Activated CD4-positive, alpha-beta T cell treated with anti-CD3 and anti-CD28 coated beads for 36 hours (primary cell): ENCODE measurements at regions of chr1 and their contacts with region 1.

Region 1: GRCh38 chr1:59432531-59433439 is 135.9 kb downstream of the FGGY start:
- DNase-seq: no peak
- ATAC-seq: peak; percentile 89
- H3K4me3 Mint-ChIP-seq: no peak overlapping the region
- H3K27ac Mint-ChIP-seq: no peak overlapping the region
- H3K4me1 Mint-ChIP-seq: peaks cover 20% of the 10 kb centered on the region
- H3K27me3 Mint-ChIP-seq: no peaks in the 10 kb centered on the region

Region 2: DNA sequence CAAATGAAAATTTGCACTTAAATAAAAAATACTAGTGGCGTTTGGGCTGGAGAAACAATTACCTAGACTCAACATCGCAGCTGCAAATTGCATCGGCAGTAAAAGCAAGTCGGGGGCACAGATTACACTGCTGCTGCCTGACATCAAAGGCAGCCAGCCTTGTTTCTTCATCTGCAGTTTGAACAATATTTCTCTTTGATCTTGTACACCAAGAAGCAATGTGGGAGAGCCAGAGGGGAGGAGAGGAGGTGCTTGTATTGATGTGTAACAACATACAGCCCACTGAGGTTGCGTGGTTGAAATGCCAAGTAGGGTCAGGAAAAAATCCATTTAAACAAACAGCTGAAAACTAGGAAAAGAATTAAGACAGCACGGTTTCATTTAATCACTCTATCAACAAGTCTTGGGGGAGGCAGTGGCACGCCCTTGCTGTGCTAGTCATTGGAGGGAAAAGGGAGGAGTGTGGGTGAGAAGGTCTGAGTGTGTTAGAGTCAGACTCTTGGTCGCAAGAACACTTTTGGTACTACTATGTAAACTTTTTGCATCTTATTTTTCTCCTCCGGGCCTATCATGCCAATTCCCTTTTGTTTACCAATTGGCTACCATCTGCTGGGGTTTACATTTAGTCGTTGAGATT is 1342.8 kb before region 1 on chr1:
- CTCF ChIA-PET with region 1: no interaction called
- POLR2A ChIA-PET with region 1: no interaction called
- intact Hi-C with region 1: no loop called
- DNase-seq: no peak
- ATAC-seq: no peak
- H3K4me3 Mint-ChIP-seq: no peak overlapping the region
- H3K27ac Mint-ChIP-seq: no peak overlapping the region
- H3K4me1 Mint-ChIP-seq: peaks cover 3% of the 10 kb centered on the region
- H3K27me3 Mint-ChIP-seq: peaks cover 5% of the 10 kb centered on the region

Region 3: DNA sequence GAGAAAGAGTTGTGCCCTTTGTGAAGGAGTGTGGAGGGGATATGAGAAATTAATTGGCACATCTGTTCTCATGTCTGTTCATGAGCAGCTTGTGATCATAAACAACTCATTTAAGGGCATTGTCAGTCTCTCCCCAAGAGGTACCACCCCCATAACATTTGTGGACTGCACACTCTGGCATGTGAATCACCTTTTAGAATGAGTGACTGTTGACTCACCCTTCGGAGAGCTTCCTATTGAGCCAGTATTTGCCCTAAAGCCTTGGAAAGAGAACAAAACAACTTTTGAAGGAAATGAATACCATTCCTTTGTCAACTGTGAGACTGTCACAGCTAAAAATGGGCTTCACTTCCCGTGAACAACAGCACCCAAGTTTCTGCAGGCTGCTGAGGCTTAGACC is 705.4 kb before region 1 on chr1:
- CTCF ChIA-PET with region 1: no interaction called
- POLR2A ChIA-PET with region 1: no interaction called
- intact Hi-C with region 1: no loop called
- DNase-seq: peak; percentile 9
- ATAC-seq: peak; percentile 71
- H3K4me3 Mint-ChIP-seq: no peak overlapping the region
- H3K27ac Mint-ChIP-seq: no peak overlapping the region
- H3K4me1 Mint-ChIP-seq: peaks cover 9% of the 10 kb centered on the region
- H3K27me3 Mint-ChIP-seq: no peaks in the 10 kb centered on the region

Region 4: GRCh38 chr1:59477286-59477685 is 44.5 kb after region 1 on chr1:
- CTCF ChIA-PET with region 1: no interaction called
- POLR2A ChIA-PET with region 1: interaction called, 3 read pairs
- intact Hi-C with region 1: loop called in 1 of 2 experiments (anchors 1 kb)
- DNase-seq: peak; percentile 76
- ATAC-seq: peak; percentile 93
- H3K4me3 Mint-ChIP-seq: no peak overlapping the region
- H3K27ac Mint-ChIP-seq: peak overlapping the region; percentile 71
- H3K4me1 Mint-ChIP-seq: peaks cover 10% of the 10 kb centered on the region
- H3K27me3 Mint-ChIP-seq: no peaks in the 10 kb centered on the region